HepG2 (cell line): ENCODE measurements at regions of chr9 and their contacts with region 1.

Region 1: DNA sequence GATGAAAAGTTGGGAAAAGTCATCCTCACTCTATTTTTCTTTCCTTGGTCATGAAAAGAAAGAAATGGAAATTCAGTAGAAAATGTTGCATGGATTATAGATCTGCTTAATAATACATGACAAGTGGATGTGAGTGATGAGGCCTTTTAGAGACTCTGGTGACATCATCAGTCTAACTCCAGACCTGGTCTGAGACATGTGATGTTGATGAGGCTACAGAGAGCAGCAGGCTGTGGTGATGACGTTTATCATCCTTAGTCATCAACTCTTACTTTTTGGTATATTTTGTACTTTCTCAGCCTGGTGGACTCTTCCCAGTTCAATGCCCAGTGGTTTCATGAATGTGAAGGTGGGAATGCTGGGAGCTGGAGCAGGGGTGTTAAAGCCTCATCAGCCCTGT is 116.4 kb downstream of the TTLL11 start:
- DNase-seq: no peak
- ATAC-seq: no peak
- H3K4me3 ChIP-seq: no peak overlapping the region
- H3K27ac ChIP-seq: no peak overlapping the region
- H3K4me1 ChIP-seq: peaks cover 53% of the 10 kb centered on the region
- H3K27me3 ChIP-seq: no peaks in the 10 kb centered on the region
- CTCF ChIP-seq: no peak
- EP300 ChIP-seq: no peak
- POLR2A ChIP-seq: no peak
- RAD21 ChIP-seq: no peak

Region 2: DNA sequence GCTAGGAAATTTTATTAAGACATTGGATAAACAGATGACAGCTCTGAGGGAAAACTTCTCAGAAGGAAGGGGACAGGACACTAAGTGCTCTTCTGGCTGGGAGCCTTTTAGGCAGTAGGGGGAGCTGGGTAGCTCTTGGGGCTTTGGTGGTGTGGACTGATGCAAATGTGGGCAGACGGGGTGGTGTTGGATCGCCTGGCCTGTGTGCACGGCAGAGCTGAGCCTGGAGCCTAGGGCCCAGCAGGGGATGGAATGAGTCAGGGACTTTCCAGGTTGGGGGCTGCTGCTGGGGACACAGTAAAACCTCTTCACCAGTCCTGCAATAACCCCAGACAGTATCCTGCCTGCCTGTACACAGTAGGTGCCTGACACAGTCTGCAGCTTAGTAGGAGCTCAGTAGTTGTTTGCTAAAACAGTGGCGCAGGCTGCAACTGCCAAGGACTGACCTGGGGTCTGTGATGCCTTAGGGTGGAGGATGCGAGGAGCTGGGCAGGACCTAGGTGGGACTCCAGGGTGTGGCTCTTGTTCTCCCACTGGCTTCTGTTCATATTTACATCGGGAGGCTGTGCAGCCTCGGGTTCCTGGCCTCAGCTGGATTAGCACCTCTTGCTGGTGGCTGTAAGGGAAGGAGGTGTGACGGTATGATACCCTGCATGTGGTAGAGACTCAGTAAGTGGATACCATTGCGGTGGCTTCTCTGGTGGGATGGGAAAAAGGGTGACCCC is 241.5 kb before region 1 on chr9:
- CTCF ChIA-PET with region 1: no interaction called
- POLR2A ChIA-PET with region 1: no interaction called
- in situ Hi-C with region 1: loop called (anchors 25 kb)
- intact Hi-C with region 1: loop called (anchors 5 kb)
- DNase-seq: peak; percentile 62
- ATAC-seq: peak; percentile 87
- H3K4me3 ChIP-seq: no peak overlapping the region
- H3K27ac ChIP-seq: no peak overlapping the region
- H3K4me1 ChIP-seq: peaks cover 38% of the 10 kb centered on the region
- H3K27me3 ChIP-seq: no peaks in the 10 kb centered on the region; a peak in 2 of 5 replicates
- CTCF ChIP-seq: peak; percentile 82
- EP300 ChIP-seq: no peak
- POLR2A ChIP-seq: no peak
- RAD21 ChIP-seq: peak; percentile 77